ENCODE measurements at regions of chr18 and their contacts with region 1.

Region 1: GRCh38 chr18:12391618-12392165 is 14.7 kb upstream of the AFG3L2 start:
- DNase-seq: peak; percentile 58
- H3K4me3 ChIP-seq: no peak overlapping the region
- H3K27ac ChIP-seq: no peak overlapping the region
- H3K4me1 ChIP-seq: peaks cover 0 to 18% (median 7%) of the 10 kb centered on the region in 4 donors
- H3K27me3 ChIP-seq: no peaks in the 10 kb centered on the region
- CTCF ChIP-seq: peak; percentile 77 to 91 (median 85)
- EP300 ChIP-seq: no peak
- POLR2A ChIP-seq: no peak

Region 2: GRCh38 chr18:12657684-12658425 is 266.2 kb after region 1 on chr18 and contains the start of gene SPIRE1:
- in situ Hi-C with region 1: loop called in 3 of 4 experiments (anchors 5 to 10 kb)
- intact Hi-C with region 1: loop called (anchors 2 kb)
- DNase-seq: peak; percentile 70
- H3K4me3 ChIP-seq: peak within 1 kb of the TSS; percentile 62 to 72 (median 68)
- H3K27ac ChIP-seq: peak within 1 kb of the TSS; percentile 88 to 94 (median 93)
- H3K4me1 ChIP-seq: peaks cover 0 to 22% (median 12%) of the 10 kb centered on the region in 4 donors
- H3K27me3 ChIP-seq: peaks cover 15% of the 10 kb centered on the region
- CTCF ChIP-seq: no peak
- EP300 ChIP-seq: no peak
- POLR2A ChIP-seq: peak; percentile 25
- total RNA-seq, gene SPIRE1: 6.0 to 7.8 (median 6.8) TPM

Region 3: DNA sequence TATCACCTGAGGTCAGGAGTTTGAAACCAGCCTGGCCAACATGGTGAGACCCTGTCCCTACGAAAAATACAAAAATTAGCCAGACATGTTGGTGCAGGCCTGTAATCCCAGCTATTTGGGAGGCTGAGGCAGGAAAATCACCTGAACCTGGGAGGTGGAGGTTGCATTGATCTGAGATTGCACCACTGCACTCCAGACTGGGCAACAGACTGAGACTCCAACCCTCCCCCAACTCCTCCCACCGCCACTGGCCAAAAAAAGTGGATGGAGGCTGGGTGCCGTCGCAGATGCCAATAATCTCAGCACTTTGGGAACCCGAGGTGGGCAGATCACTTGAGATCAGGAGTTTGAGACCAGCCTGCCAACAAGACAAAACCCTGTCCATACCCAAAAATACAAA is 276.3 kb after region 1 on chr18:
- in situ Hi-C with region 1: loop called in 3 of 4 experiments (anchors 5 to 10 kb)
- intact Hi-C with region 1: no loop called
- DNase-seq: no peak
- H3K4me3 ChIP-seq: no peak overlapping the region
- H3K27ac ChIP-seq: no peak overlapping the region
- H3K4me1 ChIP-seq: no peaks in the 10 kb centered on the region
- H3K27me3 ChIP-seq: no peaks in the 10 kb centered on the region
- CTCF ChIP-seq: no peak
- EP300 ChIP-seq: no peak
- POLR2A ChIP-seq: no peak

Measured in transverse colon (tissue), 4 donors.